ENCODE measurements at regions of chr14 and their contacts with region 1.

Region 1: DNA sequence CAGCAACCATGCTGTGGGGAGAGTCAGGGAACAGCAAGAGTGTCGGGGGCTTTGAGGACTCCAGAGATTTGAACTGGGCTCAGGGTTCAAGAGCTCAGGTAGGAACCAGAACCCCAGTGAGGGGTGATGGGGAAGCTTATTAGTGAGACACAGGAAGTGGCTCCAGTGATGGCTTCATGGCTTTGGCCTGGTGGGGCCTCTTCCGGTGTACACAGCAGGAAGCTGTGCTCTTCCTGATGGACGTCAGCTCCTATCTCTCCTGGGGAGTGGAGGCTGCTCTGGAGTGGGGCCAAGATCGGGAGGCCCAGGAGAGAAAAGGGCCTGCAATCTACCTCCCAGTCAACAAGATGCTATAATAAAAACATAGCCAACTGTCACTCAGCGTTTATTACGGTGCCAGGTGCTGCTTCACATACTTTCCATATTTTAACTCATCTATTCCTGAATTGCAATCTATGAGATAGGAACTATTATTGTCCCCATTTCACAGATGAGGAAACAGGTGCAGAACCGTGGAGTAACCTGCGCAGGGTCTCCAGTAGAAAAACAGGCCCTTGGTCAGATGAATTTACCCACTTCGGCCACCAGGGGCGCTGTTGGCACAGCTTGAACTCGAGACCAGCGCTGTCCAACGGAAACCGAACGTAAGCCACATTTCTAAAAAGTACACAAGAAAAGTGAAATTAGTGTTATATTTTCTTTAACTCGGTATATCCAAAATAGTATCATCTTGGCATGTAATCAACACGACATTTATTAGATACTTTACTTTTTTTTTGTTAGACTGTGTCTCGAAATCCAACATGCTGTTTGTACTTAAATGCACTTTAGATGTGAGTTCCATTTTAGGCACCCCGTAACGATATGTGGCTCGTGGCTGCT is 63.6 kb upstream of the DLK1 start:
- DNase-seq: no peak
- H3K4me3 ChIP-seq: no peak overlapping the region
- CTCF ChIP-seq: peak; percentile 84

Region 2: DNA sequence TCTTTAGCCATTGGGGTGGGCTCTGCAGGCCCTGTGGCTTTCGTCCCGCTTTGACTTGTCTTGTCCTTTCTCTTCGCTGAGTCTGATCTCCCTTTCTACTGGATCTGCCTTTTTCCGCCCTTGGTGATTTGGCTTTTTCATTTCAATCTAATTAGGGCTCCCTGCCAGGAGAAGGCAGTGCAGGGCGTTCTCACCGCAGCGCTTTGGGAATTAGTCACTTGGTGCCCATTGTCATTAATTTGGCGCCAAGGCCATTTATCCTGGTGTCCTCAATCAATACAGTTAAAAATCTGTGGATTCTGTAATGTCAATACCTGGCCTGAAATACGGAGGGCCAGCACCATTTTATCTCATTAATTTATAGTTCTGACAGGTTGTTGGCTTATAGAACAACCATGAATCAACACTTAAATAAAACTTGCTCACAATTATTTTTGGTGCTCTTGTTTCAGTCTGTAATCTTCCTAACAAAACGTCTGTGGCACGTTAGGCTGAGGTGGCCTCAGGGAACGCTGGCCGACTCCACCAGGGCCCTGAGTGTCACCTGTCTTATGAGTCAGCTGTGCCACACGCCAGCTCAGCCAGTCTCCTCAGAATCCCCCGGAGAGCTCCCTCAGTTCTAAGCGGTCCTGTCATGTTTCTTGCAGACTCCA is 191.6 kb before region 1 on chr14:
- CTCF ChIA-PET with region 1: no interaction called
- POLR2A ChIA-PET with region 1: no interaction called
- DNase-seq: no peak
- H3K4me3 ChIP-seq: no peak overlapping the region
- CTCF ChIP-seq: no peak

Region 3: GRCh38 chr14:100677554-100678468 is 14.7 kb after region 1 on chr14:
- CTCF ChIA-PET with region 1: interaction called, 121 read pairs
- POLR2A ChIA-PET with region 1: no interaction called
- DNase-seq: no peak
- H3K4me3 ChIP-seq: no peak overlapping the region
- CTCF ChIP-seq: no peak

Region 4: DNA sequence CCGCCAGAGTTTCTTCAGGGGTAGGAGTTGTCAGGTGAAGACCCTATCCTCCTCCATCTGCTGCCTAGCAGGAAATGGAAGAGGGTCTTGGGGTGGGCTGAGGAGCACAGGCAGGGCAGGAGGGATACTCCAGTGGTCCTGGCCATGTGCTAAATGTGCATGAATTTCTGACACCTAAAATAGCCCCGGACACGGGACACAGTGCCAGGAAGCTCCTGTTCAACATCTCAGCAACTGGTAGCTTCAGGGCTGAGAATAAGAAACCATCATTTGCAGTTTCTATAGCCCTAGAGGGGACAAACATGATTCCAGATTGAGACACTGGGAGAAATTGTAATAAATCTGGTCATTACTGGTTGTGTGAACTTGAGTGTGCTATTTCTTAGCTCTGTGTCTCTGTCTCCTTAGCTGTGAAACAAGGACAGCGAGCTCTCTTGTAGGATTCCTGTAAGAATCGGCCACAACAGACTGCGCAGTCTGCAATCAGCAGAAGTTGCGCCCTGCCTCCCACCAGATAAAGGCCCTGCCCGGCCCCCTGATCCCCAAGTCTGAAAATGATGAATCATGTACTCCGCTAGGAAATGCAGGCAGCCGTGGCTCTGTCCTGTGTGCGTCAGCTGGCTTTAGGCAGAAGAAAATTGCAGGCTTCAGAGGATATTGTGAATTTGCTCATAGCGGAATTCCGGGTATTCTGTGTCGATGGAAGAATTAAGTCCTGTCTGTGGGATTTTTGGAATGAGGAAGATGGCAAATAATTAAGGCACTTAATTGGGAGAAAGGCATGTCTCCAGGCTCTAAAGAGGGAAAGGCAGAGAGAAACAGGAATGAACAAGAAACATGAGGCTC is 127.6 kb after region 1 on chr14:
- CTCF ChIA-PET with region 1: no interaction called
- POLR2A ChIA-PET with region 1: no interaction called
- DNase-seq: peak; percentile 14
- H3K4me3 ChIP-seq: no peak overlapping the region
- CTCF ChIP-seq: no peak

Region 5: DNA sequence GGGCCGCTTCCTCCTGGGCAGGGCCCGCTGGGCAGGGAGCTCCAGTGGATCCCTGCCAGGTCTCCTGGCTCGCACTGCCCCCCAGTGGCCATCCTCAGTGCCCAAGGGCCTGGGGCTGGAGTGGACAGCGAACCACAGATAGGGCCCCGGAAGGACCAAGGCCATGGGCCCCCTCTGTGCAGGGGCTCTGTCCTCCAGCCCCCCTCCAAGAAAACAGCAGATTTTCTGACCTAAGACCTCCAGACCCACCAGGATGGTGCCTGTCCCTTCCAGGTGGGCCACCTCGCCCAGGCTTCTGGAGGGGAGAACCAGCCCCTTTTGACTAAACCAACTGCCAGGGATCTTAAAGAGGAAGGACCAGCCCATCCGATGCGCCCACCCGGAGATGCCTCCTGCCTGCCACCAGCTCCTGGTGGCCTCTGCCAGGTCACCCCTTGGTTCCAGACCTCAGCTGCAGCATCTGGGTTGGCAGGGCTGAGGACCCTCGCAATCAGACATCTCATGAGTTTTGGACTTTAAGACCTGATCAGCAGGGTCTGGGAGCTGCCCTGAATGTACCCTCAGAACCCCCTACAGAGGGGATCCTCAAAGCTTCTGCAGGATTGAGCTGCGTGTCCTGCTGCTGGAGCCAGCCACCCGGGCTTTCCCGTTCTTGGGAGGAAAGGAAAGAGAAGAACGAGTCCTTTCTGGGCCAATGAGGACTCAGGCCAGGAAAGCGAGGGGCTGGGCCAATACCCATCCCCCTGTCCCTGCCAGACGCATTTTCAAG is 572.4 kb after region 1 on chr14:
- CTCF ChIA-PET with region 1: interaction called, 12 read pairs
- POLR2A ChIA-PET with region 1: no interaction called
- DNase-seq: no peak
- H3K4me3 ChIP-seq: no peak overlapping the region
- CTCF ChIP-seq: peak; percentile 92

Measured in AG04449 (cell line).